ENCODE measurements at regions of chr1 and their contacts with region 1.

Region 1: DNA sequence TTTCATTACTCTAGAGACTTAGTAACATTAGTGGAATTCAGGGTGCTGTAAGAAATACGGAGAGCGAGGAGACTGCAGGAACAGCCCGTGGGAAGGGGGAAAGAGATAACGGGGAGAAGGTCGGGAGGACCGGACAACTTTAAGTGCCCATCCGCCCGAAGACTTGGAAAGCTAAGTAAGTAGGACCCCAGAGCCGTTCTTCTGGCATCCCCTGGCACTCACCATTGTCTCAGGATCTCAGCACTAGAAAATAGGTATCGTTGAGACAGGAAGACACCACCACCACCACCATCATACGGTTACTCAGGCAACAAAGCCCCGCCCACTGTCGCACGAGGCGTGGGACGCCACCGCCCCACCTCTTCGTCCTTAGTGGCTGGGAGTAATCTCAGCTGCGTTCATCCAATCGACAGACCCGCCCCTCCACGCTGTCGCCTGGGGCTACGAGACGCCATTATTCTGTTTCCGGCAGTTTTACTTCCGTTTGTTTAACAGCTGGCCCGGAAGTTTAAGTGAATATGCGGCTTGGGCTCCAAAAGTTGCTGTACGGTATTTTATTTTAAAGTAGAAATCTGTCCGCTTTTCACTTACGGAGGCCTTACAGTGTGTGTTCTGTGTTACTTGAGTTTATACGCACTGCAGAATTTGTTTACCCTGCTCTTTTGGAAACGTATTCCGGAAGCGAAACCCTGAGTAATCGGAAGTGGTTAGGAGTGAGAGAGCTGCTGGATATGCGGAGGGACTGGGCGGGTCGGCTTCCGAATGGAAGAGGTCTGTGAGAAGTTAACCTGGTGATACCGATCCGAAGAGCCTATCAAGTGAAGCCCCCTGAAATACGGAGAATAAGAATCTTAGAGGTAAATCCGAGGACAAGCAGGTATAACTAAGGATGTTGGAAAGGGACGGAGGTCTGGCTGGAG is at the starts of genes BLZF1 and NME7:
- DNase-seq: peak; percentile 99
- H3K4me3 Mint-ChIP-seq: no peak within 1 kb of the TSS
- H3K27ac Mint-ChIP-seq: peak within 1 kb of the TSS; percentile 36
- H3K4me1 Mint-ChIP-seq: peaks cover 35% of the 10 kb centered on the region
- H3K27me3 Mint-ChIP-seq: no peaks in the 10 kb centered on the region
- total RNA-seq, gene BLZF1: 15.1 and 16.1 TPM in 2 replicates
- total RNA-seq, gene NME7: 13.9 and 25.8 TPM in 2 replicates

Region 2: GRCh38 chr1:168342572-168343280 is 1025.0 kb before region 1 on chr1:
- intact Hi-C with region 1: loop called (anchors 5 kb)
- DNase-seq: peak; percentile 79
- H3K4me3 Mint-ChIP-seq: no peak overlapping the region
- H3K27ac Mint-ChIP-seq: peak overlapping the region; percentile 14
- H3K4me1 Mint-ChIP-seq: peaks cover 64% of the 10 kb centered on the region
- H3K27me3 Mint-ChIP-seq: peaks cover 7% of the 10 kb centered on the region

Region 3: GRCh38 chr1:168520052-168520751 is 847.5 kb before region 1 on chr1:
- intact Hi-C with region 1: loop called (anchors 2 kb)
- DNase-seq: no peak
- H3K4me3 Mint-ChIP-seq: peak overlapping the region; percentile 55
- H3K27ac Mint-ChIP-seq: peak overlapping the region; percentile 81
- H3K4me1 Mint-ChIP-seq: peaks cover 57% of the 10 kb centered on the region
- H3K27me3 Mint-ChIP-seq: no peaks in the 10 kb centered on the region

Region 4: DNA sequence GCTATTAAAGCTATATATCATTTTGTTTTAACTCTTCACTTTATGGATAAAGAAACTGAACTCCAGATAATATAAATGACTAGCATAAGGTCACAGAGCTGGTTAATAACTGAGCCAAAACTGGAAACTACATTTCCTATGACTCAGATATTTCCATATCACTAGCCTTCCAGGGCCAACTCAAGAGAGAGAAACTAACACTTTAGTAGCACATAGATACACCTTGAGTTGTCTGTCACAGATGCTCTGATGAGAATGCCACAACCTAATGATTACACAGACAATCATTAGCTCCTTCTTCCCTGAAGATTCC is 40.8 kb before region 1 on chr1:
- intact Hi-C with region 1: loop called (anchors 2 kb)
- DNase-seq: no peak
- H3K4me3 Mint-ChIP-seq: no peak overlapping the region
- H3K27ac Mint-ChIP-seq: peak overlapping the region; percentile 31
- H3K4me1 Mint-ChIP-seq: peaks cover 13% of the 10 kb centered on the region
- H3K27me3 Mint-ChIP-seq: no peaks in the 10 kb centered on the region

Region 5: GRCh38 chr1:169485544-169486278 is 118.0 kb after region 1 on chr1 and contains the start of gene SLC19A2:
- intact Hi-C with region 1: loop called (anchors 1 kb)
- DNase-seq: peak; percentile 93
- H3K4me3 Mint-ChIP-seq: peak within 1 kb of the TSS; percentile 94
- H3K27ac Mint-ChIP-seq: peak within 1 kb of the TSS; percentile 89
- H3K4me1 Mint-ChIP-seq: peaks cover 67% of the 10 kb centered on the region
- H3K27me3 Mint-ChIP-seq: no peaks in the 10 kb centered on the region
- total RNA-seq, gene SLC19A2: 12.8 and 14.0 TPM in 2 replicates

Region 6: DNA sequence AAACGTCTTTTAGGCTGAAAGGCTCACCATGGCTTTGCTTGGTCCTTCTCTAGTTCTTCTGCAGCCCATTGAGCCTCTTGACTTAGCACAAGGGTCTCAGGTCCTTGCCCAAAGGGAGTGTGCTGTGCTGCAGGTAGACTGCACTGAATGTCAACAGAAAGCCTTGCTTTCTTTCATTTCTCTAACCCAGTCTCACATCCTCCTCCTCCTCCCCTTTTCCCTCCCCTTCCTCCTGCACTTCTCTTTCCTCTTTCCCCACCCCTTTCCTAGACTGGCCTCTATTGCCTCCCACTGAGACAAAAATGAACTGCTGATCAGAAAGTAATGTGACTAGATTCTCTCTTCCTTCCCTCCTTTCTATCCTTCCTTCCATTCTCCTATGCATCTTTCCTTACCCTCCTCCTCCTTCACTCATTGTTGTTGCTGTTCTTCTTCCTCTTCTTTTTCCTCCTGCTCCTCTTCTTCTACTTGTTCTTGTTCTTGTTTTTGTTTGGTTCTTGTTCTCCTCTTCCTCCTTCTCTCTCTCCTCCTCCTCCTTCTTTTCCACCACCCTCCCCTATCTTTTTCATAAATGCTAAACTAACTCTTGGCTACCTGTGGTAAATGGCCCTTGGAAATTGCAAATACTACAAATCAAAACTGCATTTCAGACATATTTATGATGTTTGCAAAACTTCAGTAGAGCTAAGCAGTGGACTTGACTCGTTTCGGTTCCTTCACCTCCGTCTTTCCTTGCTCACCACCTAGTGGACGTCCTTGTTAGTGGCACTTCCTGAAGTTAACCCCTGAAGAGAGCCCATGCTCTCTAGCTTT is 343.9 kb after region 1 on chr1 and contains the start of gene SELL:
- intact Hi-C with region 1: loop called (anchors 5 kb)
- DNase-seq: peak; percentile 69
- H3K4me3 Mint-ChIP-seq: peak within 1 kb of the TSS; percentile 93
- H3K27ac Mint-ChIP-seq: peak within 1 kb of the TSS; percentile 86
- H3K4me1 Mint-ChIP-seq: peaks cover 40% of the 10 kb centered on the region
- H3K27me3 Mint-ChIP-seq: peaks cover 18% of the 10 kb centered on the region
- total RNA-seq, gene SELL: 115 and 117 TPM in 2 replicates

Measured in activated T-helper 1 cell treated with anti-CD3 and anti-CD28 coated beads, Interleukin-12 subunit alpha, Interleukin-12 subunit beta, Interleukin-2, Interleukin-4 antibody, amounts not matched to agents 30 ng/mL and 10 ng/mL and 1 ng/mL, durations not matched to agents 14 hours and 24 hours and 36 hours (primary cell).